ENCODE measurements at regions of chr3 and their contacts with region 1.

Region 1: DNA sequence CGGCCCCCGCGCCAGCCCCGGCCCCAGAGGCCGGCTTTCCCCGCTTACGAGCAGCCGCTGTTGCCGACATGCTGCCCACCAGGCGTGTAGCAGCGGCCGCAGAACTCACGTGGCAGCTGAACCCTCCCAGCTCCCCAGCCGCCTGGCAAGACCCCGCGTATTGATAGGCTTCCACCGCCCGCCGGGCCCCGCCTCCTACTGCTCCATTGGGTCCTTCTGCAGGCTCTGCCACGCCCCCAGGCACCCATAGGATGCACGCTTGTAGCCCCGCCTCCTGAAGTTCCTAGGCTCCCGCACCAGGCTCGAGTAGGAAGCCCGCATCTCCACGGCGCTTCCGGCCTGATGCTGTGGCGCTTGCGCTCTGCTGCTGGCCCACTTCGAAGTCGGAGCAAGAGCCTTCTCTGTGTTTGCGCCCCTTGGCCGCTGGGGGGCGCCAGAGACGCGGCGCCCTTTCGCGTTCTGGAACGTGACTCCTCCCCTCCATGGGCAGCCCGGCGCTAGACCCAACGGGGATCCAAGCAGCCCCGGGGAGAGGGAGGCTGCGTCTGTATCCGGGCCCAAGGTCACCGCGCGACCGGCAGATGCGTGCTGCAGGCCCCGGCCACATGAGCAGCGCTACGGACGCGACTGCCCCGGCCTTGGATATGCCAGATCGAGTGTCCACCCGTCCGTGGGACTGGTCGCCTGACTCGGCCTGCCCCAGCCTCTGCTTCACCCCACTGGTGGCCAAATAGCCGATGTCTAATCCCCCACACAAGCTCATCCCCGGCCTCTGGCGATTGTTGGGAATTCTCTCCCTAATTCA is at the starts of genes PARP3 and RRP9:
- DNase-seq: peak; percentile 100
- ATAC-seq: peak; percentile 93 to 97 (median 96)
- H3K4me3 ChIP-seq: peak within 1 kb of the TSS; percentile 60 to 90 (median 82)
- H3K27ac ChIP-seq: peak within 1 kb of the TSS; percentile 85 to 99 (median 96)
- H3K4me1 ChIP-seq: peaks cover 11 to 33% (median 29%) of the 10 kb centered on the region in 9 donors
- H3K27me3 ChIP-seq: no peaks in the 10 kb centered on the region
- CTCF ChIP-seq: peak; percentile 98 to 100 (median 100)
- total RNA-seq, gene PARP3: 12.9 to 34.5 (median 16.9) TPM
- total RNA-seq, gene RRP9: 8.5 to 17.3 (median 9.1) TPM

Region 2: GRCh38 chr3:51967384-51968169 is 25.6 kb after region 1 on chr3 and contains the start of gene PCBP4:
- intact Hi-C with region 1: loop called in 2 of 10 experiments (anchors 2 kb)
- DNase-seq: peak; percentile 80
- ATAC-seq: peak; percentile 54 to 84 (median 68)
- H3K4me3 ChIP-seq: peak within 1 kb of the TSS; percentile 62 to 85 (median 77)
- H3K27ac ChIP-seq: peak within 1 kb of the TSS; percentile 88 to 98 (median 96)
- H3K4me1 ChIP-seq: peaks cover 25 to 70% (median 45%) of the 10 kb centered on the region in 9 donors
- H3K27me3 ChIP-seq: peaks cover 0 to 20% (median 0%) of the 10 kb centered on the region in 7 donors
- CTCF ChIP-seq: peak in 1 of 9 donors; percentile 11
- total RNA-seq, gene PCBP4: 55.1 to 85.9 (median 59.9) TPM

Region 3: GRCh38 chr3:51974963-51975851 is 33.2 kb after region 1 on chr3 and contains the start of gene ABHD14A:
- intact Hi-C with region 1: loop called in 9 of 10 experiments (anchors 1 to 5 kb)
- DNase-seq: peak; percentile 56 to 81
- ATAC-seq: peak; percentile 73 to 83 (median 78)
- H3K4me3 ChIP-seq: peak within 1 kb of the TSS; percentile 46 to 87 (median 68)
- H3K27ac ChIP-seq: peak within 1 kb of the TSS; percentile 93 to 98 (median 96)
- H3K4me1 ChIP-seq: peaks cover 10 to 40% (median 31%) of the 10 kb centered on the region in 9 donors
- H3K27me3 ChIP-seq: no peaks in the 10 kb centered on the region
- CTCF ChIP-seq: peak in 2 of 9 donors; percentile 7 to 8
- total RNA-seq, gene ABHD14A: 19.3 to 38.6 (median 23.6) TPM

Region 4: GRCh38 chr3:51982782-51983577 is 41.0 kb after region 1 on chr3 and contains the start of gene ACY1:
- intact Hi-C with region 1: loop called in 2 of 10 experiments (anchors 2 to 5 kb)
- DNase-seq: peak; percentile 87 to 91
- ATAC-seq: peak; percentile 90 to 95 (median 92)
- H3K4me3 ChIP-seq: peak within 1 kb of the TSS; percentile 39 to 80 (median 64)
- H3K27ac ChIP-seq: peak within 1 kb of the TSS; percentile 76 to 98 (median 95)
- H3K4me1 ChIP-seq: peaks cover 9 to 35% (median 28%) of the 10 kb centered on the region in 9 donors
- H3K27me3 ChIP-seq: no peaks in the 10 kb centered on the region
- CTCF ChIP-seq: peak in 1 of 9 donors; percentile 7
- total RNA-seq, gene ACY1: 18.7 to 45.6 (median 24.7) TPM

Region 5: GRCh38 chr3:51995346-51996163 is 53.6 kb after region 1 on chr3 and contains the start of gene RPL29:
- intact Hi-C with region 1: loop called in 1 of 10 experiments (anchors 1 kb)
- DNase-seq: peak; percentile 86 to 94
- ATAC-seq: peak; percentile 89 to 97 (median 95)
- H3K4me3 ChIP-seq: peak within 1 kb of the TSS; percentile 64 to 94 (median 84)
- H3K27ac ChIP-seq: peak within 1 kb of the TSS; percentile 63 to 95 (median 86)
- H3K4me1 ChIP-seq: peaks cover 5 to 26% (median 22%) of the 10 kb centered on the region in 9 donors
- H3K27me3 ChIP-seq: no peaks in the 10 kb centered on the region
- CTCF ChIP-seq: peak in 8 of 9 donors; percentile 6 to 50 (median 34)
- total RNA-seq, gene RPL29: 505 to 754 (median 626) TPM

Region 6: DNA sequence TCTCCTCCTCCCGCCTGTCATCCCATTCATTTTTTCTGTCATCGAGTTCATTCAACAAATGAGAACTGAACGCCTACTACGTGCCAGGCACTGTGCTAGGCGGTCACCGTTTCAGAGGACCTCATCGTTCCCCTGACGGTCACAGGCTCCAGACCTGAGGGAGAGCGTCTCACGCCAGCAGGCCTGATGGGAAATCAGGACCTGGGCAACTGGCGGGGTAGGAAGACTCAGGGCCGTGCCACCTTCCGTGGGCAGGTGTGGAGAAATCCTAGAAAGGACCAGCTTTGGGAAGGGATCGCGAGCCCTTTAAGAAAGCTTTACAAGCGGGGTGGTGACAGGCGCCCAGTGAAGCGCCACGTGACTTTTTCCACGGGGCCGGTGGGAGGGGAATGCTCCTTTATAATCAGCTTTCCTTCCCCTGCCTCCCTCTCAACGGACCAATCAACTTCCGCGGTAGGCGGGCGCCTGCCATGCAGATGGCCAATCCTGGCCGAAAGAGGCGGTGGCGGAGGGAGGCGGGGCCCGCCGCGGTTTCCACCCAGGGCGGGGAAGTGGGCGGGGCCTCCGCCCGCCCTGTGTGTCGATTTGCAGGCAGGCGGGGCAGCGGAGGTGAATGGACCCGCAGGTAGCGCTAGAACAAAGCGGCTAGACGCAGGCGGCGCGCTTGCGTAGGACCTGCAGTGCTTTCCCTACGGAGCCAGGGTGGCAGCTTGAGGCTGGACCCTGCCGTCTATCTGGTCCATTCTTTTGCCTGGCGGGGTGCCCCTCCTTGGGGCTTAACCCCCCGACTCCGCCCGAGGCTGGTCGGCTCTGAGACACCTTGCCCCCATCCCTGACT is 115.2 kb after region 1 on chr3:
- intact Hi-C with region 1: loop called in 1 of 10 experiments (anchors 5 kb)
- DNase-seq: peak; percentile 99 to 100
- ATAC-seq: peak; percentile 88 to 93 (median 90)
- H3K4me3 ChIP-seq: peak overlapping the region; percentile 61 to 93 (median 70)
- H3K27ac ChIP-seq: peak overlapping the region; percentile 4 to 97 (median 90)
- H3K4me1 ChIP-seq: peaks cover 7 to 58% (median 40%) of the 10 kb centered on the region in 9 donors
- H3K27me3 ChIP-seq: no peaks in the 10 kb centered on the region
- CTCF ChIP-seq: peak in 3 of 9 donors; percentile 23 to 40 (median 33)

Region 7: GRCh38 chr3:52144034-52144795 is 202.2 kb after region 1 on chr3:
- intact Hi-C with region 1: loop called in 2 of 10 experiments (anchors 1 to 5 kb)
- DNase-seq: peak; percentile 79 to 88
- ATAC-seq: peak; percentile 67 to 89 (median 81)
- H3K4me3 ChIP-seq: no peak overlapping the region
- H3K27ac ChIP-seq: no peak overlapping the region
- H3K4me1 ChIP-seq: peaks cover 0 to 21% (median 4%) of the 10 kb centered on the region in 9 donors
- H3K27me3 ChIP-seq: no peaks in the 10 kb centered on the region
- CTCF ChIP-seq: peak; percentile 96 to 99 (median 97)